GM12878 (cell line): ENCODE measurements at regions of chr6 and their contacts with region 1.

Region 1: GRCh38 chr6:16128759-16129622 is at the start of gene MYLIP:
- DNase-seq: peak; percentile 74
- ATAC-seq: peak; percentile 87
- H3K4me3 ChIP-seq: peak within 1 kb of the TSS; percentile 86
- H3K27ac ChIP-seq: peak within 1 kb of the TSS; percentile 53
- H3K4me1 ChIP-seq: peaks cover 6% of the 10 kb centered on the region
- H3K27me3 ChIP-seq: no peaks in the 10 kb centered on the region
- CTCF ChIP-seq: peak; percentile 73 to 91 (median 79)
- EP300 ChIP-seq: peak in 1 of 2 experiments; percentile 12; a peak in 1 of 4 replicates
- POLR2A ChIP-seq: peak; percentile 100
- RAD21 ChIP-seq: peak; percentile 77
- polyA plus RNA-seq, gene MYLIP: 5.3 to 5.8 TPM

Region 2: GRCh38 chr6:15691250-15691869 is 437.6 kb before region 1 on chr6:
- CTCF ChIA-PET with region 1: interaction called, 131 read pairs
- POLR2A ChIA-PET with region 1: interaction called, 17 read pairs
- RAD21 ChIA-PET with region 1: interaction called, 83 read pairs
- SMC1A ChIA-PET with region 1: interaction called, 87 read pairs
- in situ Hi-C with region 1: loop called (anchors 5 kb)
- intact Hi-C with region 1: loop called (anchors 1 kb)
- DNase-seq: peak; percentile 74
- ATAC-seq: peak; percentile 98
- H3K4me3 ChIP-seq: no peak overlapping the region
- H3K27ac ChIP-seq: no peak overlapping the region
- H3K4me1 ChIP-seq: no peaks in the 10 kb centered on the region; the same call in 1 of the 2 replicates
- H3K27me3 ChIP-seq: no peaks in the 10 kb centered on the region
- CTCF ChIP-seq: peak; percentile 100; a peak in 5 of 6 replicates
- EP300 ChIP-seq: 0 out of 4 replicates have a peak, but pooled peaks of 1 of the 2 experiments have one; percentile 8
- POLR2A ChIP-seq: no peak
- RAD21 ChIP-seq: peak; percentile 100

Region 3: GRCh38 chr6:15776458-15776980 is 352.5 kb before region 1 on chr6:
- CTCF ChIA-PET with region 1: interaction called, 15 read pairs
- POLR2A ChIA-PET with region 1: interaction called, 5 read pairs
- RAD21 ChIA-PET with region 1: interaction called, 21 read pairs
- SMC1A ChIA-PET with region 1: interaction called, 12 read pairs
- in situ Hi-C with region 1: no loop called
- intact Hi-C with region 1: no loop called
- DNase-seq: peak; percentile 55
- ATAC-seq: peak; percentile 89
- H3K4me3 ChIP-seq: no peak overlapping the region
- H3K27ac ChIP-seq: no peak overlapping the region
- H3K4me1 ChIP-seq: peaks cover 7% of the 10 kb centered on the region
- H3K27me3 ChIP-seq: no peaks in the 10 kb centered on the region
- CTCF ChIP-seq: no peak
- EP300 ChIP-seq: peak; percentile 85 to 89; a peak in 2 of 4 replicates
- POLR2A ChIP-seq: no peak
- RAD21 ChIP-seq: 0 out of 2 replicates have a peak, but pooled peaks have one; percentile 16

Region 4: GRCh38 chr6:15893556-15894268 is 235.3 kb before region 1 on chr6:
- CTCF ChIA-PET with region 1: interaction called, 11 read pairs
- POLR2A ChIA-PET with region 1: interaction called, 53 read pairs
- RAD21 ChIA-PET with region 1: interaction called, 220 read pairs
- SMC1A ChIA-PET with region 1: interaction called, 184 read pairs
- in situ Hi-C with region 1: no loop called
- intact Hi-C with region 1: no loop called
- DNase-seq: no peak
- ATAC-seq: 0 out of 3 replicates have a peak, but pooled peaks have one; percentile 22
- H3K4me3 ChIP-seq: no peak overlapping the region
- H3K27ac ChIP-seq: no peak overlapping the region
- H3K4me1 ChIP-seq: peaks cover 14% of the 10 kb centered on the region
- H3K27me3 ChIP-seq: no peaks in the 10 kb centered on the region
- CTCF ChIP-seq: peak in 2 of 3 experiments; percentile 37 to 59; a peak in 3 of 6 replicates
- EP300 ChIP-seq: no peak
- POLR2A ChIP-seq: no peak
- RAD21 ChIP-seq: peak; percentile 41

Region 5: DNA sequence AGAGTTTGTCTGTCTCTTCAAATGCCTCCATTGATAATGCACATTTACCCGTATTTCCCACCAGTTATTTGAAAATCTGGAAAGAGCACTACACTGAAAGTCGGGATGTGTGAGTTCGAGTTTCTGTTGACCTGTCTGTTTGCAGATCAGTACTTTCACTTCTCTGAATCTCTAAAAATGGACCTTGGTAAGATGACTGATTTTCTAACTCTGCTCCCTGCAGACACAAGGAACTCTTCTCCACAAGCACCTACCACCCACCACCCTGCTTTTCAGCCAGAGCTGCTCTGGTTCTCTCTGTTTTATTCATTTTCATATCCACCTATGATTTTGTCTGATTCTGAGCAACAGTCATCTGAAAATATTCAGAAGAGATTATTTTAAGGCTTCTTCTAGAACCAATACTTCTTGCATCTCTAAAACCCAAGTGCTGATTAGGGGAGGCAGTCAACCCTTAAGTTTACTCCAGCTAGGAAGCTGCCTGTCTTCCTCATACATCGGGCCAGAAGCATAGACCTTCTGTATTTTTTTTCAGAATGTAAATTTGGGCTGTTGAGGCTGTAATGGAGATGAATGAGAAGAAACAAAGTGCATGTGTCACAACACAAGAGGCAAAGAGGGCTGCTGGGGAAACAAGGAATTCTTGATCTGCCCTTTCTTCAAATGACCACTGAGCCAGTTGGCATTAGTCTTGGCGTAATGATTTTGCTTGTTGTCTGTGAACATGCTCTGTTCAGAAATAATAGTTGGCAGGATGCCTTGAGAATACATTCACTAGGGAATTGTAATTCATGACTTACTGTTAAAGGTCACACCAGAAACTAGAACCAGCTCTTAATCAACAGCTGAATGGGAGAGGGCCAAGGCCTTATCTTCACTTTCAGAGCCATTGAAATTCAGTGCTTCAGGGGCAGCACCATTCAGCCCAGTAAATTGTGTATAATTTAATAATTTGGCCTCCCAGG is 85.5 kb before region 1 on chr6:
- CTCF ChIA-PET with region 1: interaction called, 13 read pairs
- POLR2A ChIA-PET with region 1: interaction called, 5 read pairs
- RAD21 ChIA-PET with region 1: interaction called, 16 read pairs
- SMC1A ChIA-PET with region 1: interaction called, 11 read pairs
- in situ Hi-C with region 1: no loop called
- intact Hi-C with region 1: loop called (anchors 5 kb)
- DNase-seq: peak; percentile 62
- ATAC-seq: peak; percentile 91
- H3K4me3 ChIP-seq: no peak overlapping the region
- H3K27ac ChIP-seq: peak overlapping the region; percentile 59
- H3K4me1 ChIP-seq: peaks cover 29% of the 10 kb centered on the region
- H3K27me3 ChIP-seq: no peaks in the 10 kb centered on the region
- CTCF ChIP-seq: no peak
- EP300 ChIP-seq: peak; percentile 27 to 58; a peak in 2 of 4 replicates
- POLR2A ChIP-seq: no peak
- RAD21 ChIP-seq: no peak

Region 6: DNA sequence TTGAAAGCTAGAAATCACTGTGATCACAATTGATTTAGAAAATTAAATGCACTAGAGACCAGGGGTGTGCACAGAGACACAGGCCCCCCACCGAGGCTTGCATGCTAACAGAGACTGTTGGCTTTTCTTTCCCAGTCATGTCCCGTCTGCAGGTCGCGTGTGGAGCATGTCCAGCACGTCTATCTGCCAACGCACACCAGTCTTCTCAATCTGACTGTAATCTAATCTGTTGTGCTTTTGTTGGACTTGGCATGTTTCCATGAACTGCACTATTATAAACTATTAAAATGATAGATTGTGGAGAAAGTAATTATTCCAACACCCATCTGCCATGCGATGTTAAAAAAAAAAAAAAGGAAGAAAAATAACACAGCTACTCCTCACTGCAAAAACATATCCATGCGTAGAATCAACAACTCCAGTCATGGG is 17.6 kb after region 1 on chr6:
- CTCF ChIA-PET with region 1: interaction called, 17 read pairs
- POLR2A ChIA-PET with region 1: interaction called, 5 read pairs
- RAD21 ChIA-PET with region 1: interaction called, 5 read pairs
- SMC1A ChIA-PET with region 1: interaction called, 30 read pairs
- in situ Hi-C with region 1: no loop called
- intact Hi-C with region 1: no loop called
- DNase-seq: no peak
- ATAC-seq: no peak
- H3K4me3 ChIP-seq: no peak overlapping the region
- H3K27ac ChIP-seq: no peak overlapping the region
- H3K4me1 ChIP-seq: no peaks in the 10 kb centered on the region
- H3K27me3 ChIP-seq: no peaks in the 10 kb centered on the region
- CTCF ChIP-seq: no peak
- EP300 ChIP-seq: no peak
- POLR2A ChIP-seq: no peak
- RAD21 ChIP-seq: no peak

Region 7: GRCh38 chr6:16206595-16207037 is 77.6 kb after region 1 on chr6:
- CTCF ChIA-PET with region 1: interaction called, 34 read pairs
- POLR2A ChIA-PET with region 1: interaction called, 4 read pairs
- RAD21 ChIA-PET with region 1: interaction called, 15 read pairs
- SMC1A ChIA-PET with region 1: interaction called, 40 read pairs
- in situ Hi-C with region 1: no loop called
- intact Hi-C with region 1: loop called (anchors 1 kb)
- DNase-seq: no peak
- ATAC-seq: peak; percentile 57
- H3K4me3 ChIP-seq: no peak overlapping the region
- H3K27ac ChIP-seq: no peak overlapping the region
- H3K4me1 ChIP-seq: peaks cover 16% of the 10 kb centered on the region
- H3K27me3 ChIP-seq: peaks cover 0 to 3% of the 10 kb centered on the region in 2 experiments; a peak in 1 of 4 replicates
- CTCF ChIP-seq: peak; percentile 86 to 95 (median 93)
- EP300 ChIP-seq: no peak
- POLR2A ChIP-seq: no peak
- RAD21 ChIP-seq: peak; percentile 96

Region 8: GRCh38 chr6:16332175-16332542 is 203.2 kb after region 1 on chr6:
- CTCF ChIA-PET with region 1: no interaction called
- POLR2A ChIA-PET with region 1: no interaction called
- RAD21 ChIA-PET with region 1: no interaction called
- SMC1A ChIA-PET with region 1: no interaction called
- in situ Hi-C with region 1: no loop called
- intact Hi-C with region 1: no loop called
- DNase-seq: peak; percentile 78
- ATAC-seq: peak; percentile 99
- H3K4me3 ChIP-seq: no peak overlapping the region
- H3K27ac ChIP-seq: peak overlapping the region; percentile 13; the same call in 1 of the 2 replicates
- H3K4me1 ChIP-seq: peaks cover 19% of the 10 kb centered on the region
- H3K27me3 ChIP-seq: no peaks in the 10 kb centered on the region
- CTCF ChIP-seq: peak; percentile 77 to 95 (median 94); a peak in 5 of 6 replicates
- EP300 ChIP-seq: no peak
- POLR2A ChIP-seq: no peak
- RAD21 ChIP-seq: peak; percentile 99